ENCODE measurements at regions of chr9 and their contacts with region 1.

Region 1: GRCh38 chr9:96854073-96854876 is at the start of gene ZNF782:
- DNase-seq: peak; percentile 86
- ATAC-seq: peak; percentile 94
- H3K4me3 ChIP-seq: peak within 1 kb of the TSS; percentile 76 to 77
- H3K27ac ChIP-seq: peak within 1 kb of the TSS; percentile 49; the same call in 1 of the 2 replicates
- H3K4me1 ChIP-seq: peaks cover 6 to 17% of the 10 kb centered on the region in 2 experiments; a peak in 3 of 4 replicates
- H3K27me3 ChIP-seq: no peaks in the 10 kb centered on the region
- CTCF ChIP-seq: no peak
- POLR2A ChIP-seq: peak; percentile 55
- RAD21 ChIP-seq: no peak
- total RNA-seq, gene ZNF782: 3.7 TPM

Region 2: DNA sequence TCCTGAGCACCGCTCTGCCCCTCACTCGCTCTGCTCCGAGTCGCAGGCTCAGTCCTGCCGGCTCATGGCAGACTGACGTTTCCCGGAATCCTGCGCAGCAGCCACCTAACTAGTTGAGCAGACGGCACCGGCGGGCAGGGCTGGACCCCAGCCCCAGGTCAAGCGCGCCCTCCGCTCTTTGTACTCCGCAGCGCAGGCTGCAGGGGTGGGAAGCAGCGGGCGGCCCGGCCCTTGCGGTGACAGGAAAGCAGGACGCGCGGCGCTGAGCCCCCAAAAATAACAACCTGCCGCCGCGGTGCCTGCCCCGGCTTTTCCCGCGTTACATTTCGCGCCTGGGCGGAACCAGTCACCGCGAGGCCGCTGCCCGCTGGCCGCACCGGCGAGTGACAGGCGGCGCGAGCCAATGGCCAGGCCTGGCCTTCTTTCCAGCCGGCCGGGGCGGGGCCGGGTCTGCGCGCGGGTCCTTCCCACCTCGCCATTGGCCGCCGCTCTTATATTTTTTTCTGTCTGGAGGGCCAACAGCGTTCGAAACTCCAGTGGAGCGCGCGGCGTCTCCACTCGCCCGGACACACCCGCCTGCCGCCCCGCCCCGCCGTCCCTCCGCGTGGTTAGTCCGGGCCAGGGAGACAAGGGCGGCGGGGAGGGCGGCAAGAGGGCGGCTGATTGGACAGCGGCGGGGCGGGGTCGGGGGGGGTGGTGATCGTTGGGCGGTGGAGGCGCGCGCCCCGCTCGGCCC is 436.0 kb before region 1 on chr9 and contains the start of gene ZNF367:
- CTCF ChIA-PET with region 1: no interaction called
- POLR2A ChIA-PET with region 1: no interaction called
- RAD21 ChIA-PET with region 1: no interaction called
- intact Hi-C with region 1: loop called (anchors 10 kb)
- DNase-seq: peak; percentile 90
- ATAC-seq: peak; percentile 78
- H3K4me3 ChIP-seq: peak within 1 kb of the TSS; percentile 69 to 73
- H3K27ac ChIP-seq: peak within 1 kb of the TSS; percentile 99
- H3K4me1 ChIP-seq: peaks cover 22 to 44% of the 10 kb centered on the region in 2 experiments
- H3K27me3 ChIP-seq: no peaks in the 10 kb centered on the region
- CTCF ChIP-seq: no peak
- POLR2A ChIP-seq: no peak
- RAD21 ChIP-seq: no peak
- total RNA-seq, gene ZNF367: 18.1 TPM

Region 3: DNA sequence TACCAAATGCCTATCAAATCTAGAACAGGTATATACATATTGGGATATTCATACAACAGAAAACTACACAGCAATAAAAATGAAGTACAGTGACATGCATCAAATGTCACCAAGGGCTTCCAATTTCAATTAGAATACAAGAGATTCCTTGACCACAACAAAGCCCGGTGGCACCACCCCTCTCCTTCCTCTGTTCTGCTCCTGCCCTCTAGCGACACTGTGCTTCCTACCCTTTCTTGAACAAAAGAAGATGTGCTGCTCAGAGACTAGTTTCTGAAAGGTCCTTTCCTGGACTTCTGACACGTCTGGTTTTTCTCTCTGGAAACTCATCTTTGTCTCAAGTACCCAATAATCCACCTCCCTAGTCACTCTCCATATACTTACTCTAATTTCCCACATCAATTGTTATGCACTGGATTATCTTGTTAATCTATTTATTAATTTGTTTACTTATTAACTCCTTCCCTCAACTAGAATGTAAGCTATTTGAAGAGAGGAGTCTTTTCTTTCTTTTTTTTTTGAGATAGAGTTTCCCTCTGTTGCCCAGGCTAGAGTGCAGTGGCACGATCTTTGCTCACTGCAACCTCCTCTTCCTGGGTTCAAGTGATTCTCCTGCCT is 255.0 kb after region 1 on chr9:
- CTCF ChIA-PET with region 1: interaction called, 21 read pairs
- POLR2A ChIA-PET with region 1: interaction called, 3 read pairs
- RAD21 ChIA-PET with region 1: interaction called, 3 to 4 read pairs
- intact Hi-C with region 1: loop called (anchors 1 kb)
- DNase-seq: peak; percentile 69
- ATAC-seq: peak; percentile 99
- H3K4me3 ChIP-seq: no peak overlapping the region
- H3K27ac ChIP-seq: no peak overlapping the region
- H3K4me1 ChIP-seq: peaks cover 3 to 13% of the 10 kb centered on the region in 2 experiments; a peak in 2 of 4 replicates
- H3K27me3 ChIP-seq: no peaks in the 10 kb centered on the region
- CTCF ChIP-seq: peak; percentile 77 to 79 (median 77); a peak in 5 of 6 replicates
- POLR2A ChIP-seq: no peak
- RAD21 ChIP-seq: peak; percentile 96

Region 4: GRCh38 chr9:97367729-97368128 is 513.5 kb after region 1 on chr9:
- CTCF ChIA-PET with region 1: no interaction called
- POLR2A ChIA-PET with region 1: no interaction called
- RAD21 ChIA-PET with region 1: no interaction called
- intact Hi-C with region 1: no loop called
- DNase-seq: no peak
- ATAC-seq: no peak
- H3K4me3 ChIP-seq: no peak overlapping the region
- H3K27ac ChIP-seq: no peak overlapping the region
- H3K4me1 ChIP-seq: no peaks in the 10 kb centered on the region
- H3K27me3 ChIP-seq: no peaks in the 10 kb centered on the region
- CTCF ChIP-seq: no peak
- POLR2A ChIP-seq: no peak
- RAD21 ChIP-seq: no peak

Region 5: DNA sequence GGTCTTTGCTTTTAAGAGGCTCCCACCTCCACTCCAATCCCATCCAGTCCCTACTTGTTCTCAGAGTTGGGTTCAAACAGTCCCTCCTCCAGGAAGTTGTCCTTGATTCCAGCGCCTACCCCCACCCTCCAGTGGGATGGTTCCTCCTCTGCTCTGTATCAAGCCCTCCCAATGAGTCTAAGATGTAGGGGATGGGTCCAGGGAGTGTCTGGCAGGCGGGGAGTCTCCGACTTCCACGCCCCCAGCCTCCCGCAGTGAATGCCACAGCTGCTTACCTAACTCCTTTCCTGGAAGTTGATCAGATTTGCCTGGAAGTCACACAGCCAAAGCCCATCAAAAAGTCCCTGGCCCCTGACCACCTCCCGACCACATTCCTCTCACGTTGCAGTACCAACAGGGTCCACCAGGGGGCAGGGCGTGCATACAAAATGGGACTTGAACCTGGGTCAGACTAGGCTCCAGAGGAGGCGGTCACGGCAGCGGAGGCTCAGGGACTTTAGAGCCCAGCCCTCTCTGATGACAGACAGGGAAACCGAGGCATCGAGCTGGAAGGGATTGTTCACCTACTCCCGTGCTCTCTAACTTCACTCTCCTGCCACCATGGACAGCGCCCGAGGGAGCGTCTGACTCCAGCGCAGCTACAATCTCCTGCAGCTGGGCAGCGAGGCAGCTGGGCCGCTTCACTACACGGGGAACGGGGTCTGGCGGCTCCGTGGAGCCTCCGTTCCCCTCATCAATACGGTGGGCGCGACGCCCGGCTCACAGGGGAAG is 532.6 kb after region 1 on chr9:
- CTCF ChIA-PET with region 1: no interaction called
- POLR2A ChIA-PET with region 1: no interaction called
- RAD21 ChIA-PET with region 1: no interaction called
- intact Hi-C with region 1: loop called (anchors 5 kb)
- DNase-seq: peak; percentile 22
- ATAC-seq: peak; percentile 85
- H3K4me3 ChIP-seq: no peak overlapping the region
- H3K27ac ChIP-seq: no peak overlapping the region
- H3K4me1 ChIP-seq: peaks cover 3 to 19% of the 10 kb centered on the region in 2 experiments; a peak in 3 of 4 replicates
- H3K27me3 ChIP-seq: no peaks in the 10 kb centered on the region
- CTCF ChIP-seq: peak; percentile 77 to 99 (median 96)
- POLR2A ChIP-seq: no peak
- RAD21 ChIP-seq: peak; percentile 93

Region 6: DNA sequence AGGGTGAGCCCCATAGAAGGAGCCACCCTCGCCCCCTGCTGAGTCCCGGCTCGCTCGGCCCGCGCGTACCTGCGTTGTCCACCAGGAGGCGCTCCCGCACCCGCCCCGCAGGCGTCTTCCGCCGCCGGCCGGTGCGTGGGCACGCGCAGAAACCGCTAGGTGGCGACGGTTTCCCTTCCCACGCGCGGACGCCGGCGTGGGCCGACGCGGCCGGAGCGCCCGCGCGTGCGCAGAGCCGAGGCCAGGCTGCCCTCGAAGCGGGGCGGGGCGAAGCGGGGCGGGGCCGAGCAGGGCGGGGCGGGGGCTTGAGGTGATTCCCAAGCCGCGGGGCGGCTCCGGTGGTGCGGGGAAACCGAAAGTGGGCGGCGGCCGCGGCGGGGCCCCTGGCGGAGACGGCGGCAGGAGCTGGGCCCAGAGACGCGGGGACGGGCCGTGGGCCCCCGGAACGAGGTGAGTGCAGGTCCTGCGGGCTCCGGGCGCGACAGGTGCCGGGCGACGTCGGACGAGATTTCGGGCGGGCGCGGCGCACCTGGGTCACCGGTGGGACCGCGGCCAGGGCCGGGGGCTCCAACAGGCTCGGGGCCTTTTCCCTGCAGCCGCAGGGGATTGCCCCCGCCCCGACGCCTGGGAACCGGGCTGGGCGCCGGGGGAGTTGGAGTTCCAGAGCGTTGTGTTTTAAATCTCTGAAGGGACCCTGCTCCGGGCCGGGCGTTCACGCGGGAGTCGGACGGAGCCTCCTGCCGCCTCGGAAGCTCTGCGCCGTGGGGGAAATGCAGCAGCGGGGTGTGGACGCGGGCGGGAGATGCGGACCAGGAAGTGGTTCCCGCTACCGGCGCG is 557.7 kb after region 1 on chr9 and contains the start of gene TDRD7:
- CTCF ChIA-PET with region 1: interaction called, 3 read pairs
- POLR2A ChIA-PET with region 1: no interaction called
- RAD21 ChIA-PET with region 1: no interaction called
- intact Hi-C with region 1: loop called (anchors 5 kb)
- DNase-seq: peak; percentile 61
- ATAC-seq: peak; percentile 90
- H3K4me3 ChIP-seq: peak within 1 kb of the TSS; percentile 63 to 69
- H3K27ac ChIP-seq: peak within 1 kb of the TSS; percentile 47; the same call in 1 of the 2 replicates
- H3K4me1 ChIP-seq: peaks cover 0 to 12% of the 10 kb centered on the region in 2 experiments; a peak in 2 of 4 replicates
- H3K27me3 ChIP-seq: no peaks in the 10 kb centered on the region
- CTCF ChIP-seq: peak; percentile 84 to 99 (median 98)
- POLR2A ChIP-seq: no peak
- RAD21 ChIP-seq: peak; percentile 71
- total RNA-seq, gene TDRD7: 8.0 TPM

Region 7: DNA sequence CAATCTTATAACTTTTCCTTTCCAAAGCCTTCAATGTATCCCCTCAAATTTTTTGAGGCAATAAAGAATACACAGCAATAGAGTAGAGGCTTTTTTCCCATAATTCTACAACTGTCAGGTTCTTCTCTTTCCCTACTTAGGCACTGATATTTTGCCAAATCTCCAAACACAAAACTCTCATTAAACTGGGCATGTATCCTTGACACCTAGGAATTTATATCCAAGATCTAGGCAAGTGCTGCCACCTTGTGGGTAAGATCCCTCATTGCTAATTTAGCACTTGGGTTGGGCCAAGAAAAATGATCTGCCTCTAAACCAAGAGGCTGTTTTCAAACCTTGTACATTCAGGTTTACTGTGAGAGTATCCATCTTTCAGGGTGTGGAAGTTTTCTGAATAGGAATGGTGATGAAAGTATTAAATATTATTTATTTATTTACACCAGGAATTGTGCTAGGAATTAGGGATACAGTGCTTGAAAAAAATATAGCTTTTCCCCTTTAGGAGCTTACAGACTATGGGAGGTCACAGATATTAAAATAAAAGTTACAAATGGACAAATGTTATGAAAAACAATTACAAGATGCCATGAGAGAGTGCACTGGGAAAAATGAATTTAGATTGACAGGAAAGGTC is 761.3 kb after region 1 on chr9:
- CTCF ChIA-PET with region 1: interaction called, 5 read pairs
- POLR2A ChIA-PET with region 1: no interaction called
- RAD21 ChIA-PET with region 1: no interaction called
- intact Hi-C with region 1: loop called (anchors 5 kb)
- DNase-seq: peak; percentile 29
- ATAC-seq: peak; percentile 81
- H3K4me3 ChIP-seq: no peak overlapping the region
- H3K27ac ChIP-seq: no peak overlapping the region
- H3K4me1 ChIP-seq: no peaks in the 10 kb centered on the region
- H3K27me3 ChIP-seq: no peaks in the 10 kb centered on the region
- CTCF ChIP-seq: peak; percentile 76 to 89 (median 83); a peak in 5 of 6 replicates
- POLR2A ChIP-seq: no peak
- RAD21 ChIP-seq: peak; percentile 84

Measured in HCT116 (cell line).